ENCODE measurements at regions of chr11 and their contacts with region 1.

Region 1: DNA sequence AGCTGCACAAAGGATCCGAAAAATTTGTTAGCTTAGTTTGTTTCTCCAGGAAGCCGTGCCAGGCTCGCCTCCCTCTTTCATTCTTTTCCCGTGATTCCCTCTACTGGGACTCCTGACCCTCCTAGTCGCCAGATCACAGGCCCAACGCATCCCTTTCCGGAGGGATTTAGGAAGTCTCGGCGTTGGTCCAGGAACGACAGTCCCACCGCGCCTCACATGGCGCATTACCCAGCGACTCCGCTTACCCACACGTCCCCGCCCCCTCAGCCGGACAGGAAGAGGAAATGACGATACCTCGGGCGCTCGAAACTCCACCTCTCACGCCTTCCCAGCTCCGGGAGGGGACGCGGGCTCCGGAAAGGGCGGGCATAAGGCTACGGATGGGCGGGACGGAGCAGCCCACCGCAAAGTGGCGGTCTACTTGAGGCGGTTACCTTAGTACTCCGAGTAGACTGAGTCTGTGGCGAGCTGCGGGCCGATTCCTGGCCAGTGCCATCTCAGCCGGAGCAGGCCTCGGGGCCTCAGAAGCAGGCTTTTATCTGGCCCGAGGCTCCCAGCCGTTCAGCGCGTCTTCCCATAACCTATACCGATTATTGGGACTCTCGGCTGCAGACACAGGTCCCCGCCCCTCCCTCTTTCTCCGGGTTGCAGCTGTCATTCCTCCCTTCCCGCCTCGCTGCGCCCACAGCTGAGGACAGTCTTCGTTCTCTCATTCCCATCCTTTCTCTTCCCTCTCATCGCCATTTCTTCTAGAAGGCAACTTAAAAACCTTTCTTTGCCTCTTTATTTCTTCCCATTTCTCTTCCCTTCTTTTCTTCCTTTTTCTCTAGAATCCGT is at the start of gene CCDC15:
- DNase-seq: peak; percentile 99
- ATAC-seq: peak; percentile 97
- H3K4me3 ChIP-seq: peak within 1 kb of the TSS; percentile 76
- H3K27ac ChIP-seq: peak within 1 kb of the TSS; percentile 70
- H3K4me1 ChIP-seq: peaks cover 24% of the 10 kb centered on the region
- H3K27me3 ChIP-seq: no peaks in the 10 kb centered on the region
- CTCF ChIP-seq: no peak
- total RNA-seq, gene CCDC15: 8.6 and 11.4 TPM in 2 replicates

Region 2: GRCh38 chr11:124622531-124623451 is 331.2 kb before region 1 on chr11 and contains the start of gene TBRG1:
- CTCF ChIA-PET with region 1: no interaction called
- POLR2A ChIA-PET with region 1: no interaction called
- intact Hi-C with region 1: loop called (anchors 5 kb)
- DNase-seq: peak; percentile 88
- ATAC-seq: peak; percentile 96
- H3K4me3 ChIP-seq: peak within 1 kb of the TSS; percentile 81
- H3K27ac ChIP-seq: peak within 1 kb of the TSS; percentile 64
- H3K4me1 ChIP-seq: peaks cover 17% of the 10 kb centered on the region
- H3K27me3 ChIP-seq: 0 out of 2 replicates have a peak, but pooled peaks cover 6% of the 10 kb centered on the region
- CTCF ChIP-seq: no peak
- total RNA-seq, gene TBRG1: 20.6 and 21.8 TPM in 2 replicates

Region 3: DNA sequence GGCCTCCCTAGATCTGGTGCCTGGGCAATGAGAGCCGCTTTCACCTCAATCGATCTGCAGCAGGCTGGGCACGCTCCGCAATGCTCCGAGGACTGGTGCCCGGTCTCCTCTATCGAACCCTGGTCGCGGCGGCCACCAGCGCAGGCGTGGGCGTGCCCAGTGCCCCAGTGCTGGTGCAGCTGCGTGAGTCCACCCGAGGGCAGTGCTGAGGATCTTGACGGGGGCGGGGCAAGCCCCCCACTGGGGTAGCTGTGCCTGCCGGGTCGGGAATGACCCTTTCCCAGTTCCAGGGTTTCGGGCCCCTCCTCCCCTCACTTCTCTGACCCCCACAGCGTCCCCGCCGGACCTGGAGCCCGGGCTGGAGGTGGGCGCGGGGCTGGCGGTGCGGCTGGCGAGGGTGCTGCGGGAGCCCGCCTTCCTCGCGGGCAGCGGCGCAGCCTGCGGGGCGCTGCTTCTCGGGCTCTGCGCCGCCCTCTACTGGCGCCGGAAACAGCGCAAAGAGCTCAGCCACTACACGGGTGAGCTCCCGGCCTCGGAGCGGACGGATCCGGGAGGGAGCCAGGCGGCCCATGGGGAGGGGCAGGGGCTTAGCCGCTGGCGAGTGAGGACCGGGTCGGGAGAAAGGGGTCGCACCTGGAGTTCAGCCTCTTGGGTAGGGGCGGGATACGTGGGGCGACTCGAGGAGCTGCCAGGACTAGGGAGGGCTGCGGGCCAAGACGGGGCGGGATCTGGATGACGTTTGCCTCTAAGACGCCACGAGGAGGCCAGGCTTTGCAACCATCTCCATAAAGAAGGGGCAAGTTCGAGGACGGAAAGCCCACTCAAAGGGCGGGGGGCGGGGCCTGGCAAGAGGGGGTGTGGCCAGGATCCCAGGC is 77.8 kb before region 1 on chr11:
- CTCF ChIA-PET with region 1: interaction called, 12 read pairs
- POLR2A ChIA-PET with region 1: interaction called, 10 read pairs
- intact Hi-C with region 1: loop called (anchors 1 kb)
- DNase-seq: peak; percentile 91
- ATAC-seq: peak; percentile 93
- H3K4me3 ChIP-seq: peak overlapping the region; percentile 76
- H3K27ac ChIP-seq: peak overlapping the region; percentile 61
- H3K4me1 ChIP-seq: peaks cover 12% of the 10 kb centered on the region
- H3K27me3 ChIP-seq: no peaks in the 10 kb centered on the region
- CTCF ChIP-seq: peak; percentile 94

Region 4: GRCh38 chr11:124900464-124900863 is 53.5 kb before region 1 on chr11:
- CTCF ChIA-PET with region 1: interaction called, 8 read pairs
- POLR2A ChIA-PET with region 1: interaction called, 7 read pairs
- intact Hi-C with region 1: loop called (anchors 1 kb)
- DNase-seq: peak; percentile 98
- ATAC-seq: peak; percentile 60
- H3K4me3 ChIP-seq: peak overlapping the region; percentile 41; the same call in 1 of the 2 replicates
- H3K27ac ChIP-seq: peak overlapping the region; percentile 88
- H3K4me1 ChIP-seq: peaks cover 73% of the 10 kb centered on the region
- H3K27me3 ChIP-seq: no peaks in the 10 kb centered on the region
- CTCF ChIP-seq: no peak

Region 5: GRCh38 chr11:124920870-124921609 is 32.9 kb before region 1 on chr11:
- CTCF ChIA-PET with region 1: no interaction called
- POLR2A ChIA-PET with region 1: no interaction called
- intact Hi-C with region 1: no loop called
- DNase-seq: no peak
- ATAC-seq: peak; percentile 59
- H3K4me3 ChIP-seq: peak overlapping the region; percentile 22; the same call in 1 of the 2 replicates
- H3K27ac ChIP-seq: no peak overlapping the region
- H3K4me1 ChIP-seq: no peaks in the 10 kb centered on the region
- H3K27me3 ChIP-seq: no peaks in the 10 kb centered on the region
- CTCF ChIP-seq: no peak